Heart left ventricle (tissue), 16 donors: ENCODE measurements at regions of chr1 and their contacts with region 1.

Region 1: GRCh38 chr1:12549460-12550349 is 68.3 kb downstream of the DHRS3 start:
- DNase-seq: peak; percentile 54 to 85 (median 69)
- ATAC-seq: peak; percentile 4 to 41 (median 32)
- H3K4me3 ChIP-seq: no peak overlapping the region
- H3K27ac ChIP-seq: peak overlapping the region in 11 of 12 donors; percentile 45 to 91 (median 73)
- H3K4me1 ChIP-seq: peaks cover 13 to 67% (median 37%) of the 10 kb centered on the region in 12 donors
- H3K27me3 ChIP-seq: no peaks in the 10 kb centered on the region
- CTCF ChIP-seq: no peak
- POLR2A ChIP-seq: no peak

Region 2: DNA sequence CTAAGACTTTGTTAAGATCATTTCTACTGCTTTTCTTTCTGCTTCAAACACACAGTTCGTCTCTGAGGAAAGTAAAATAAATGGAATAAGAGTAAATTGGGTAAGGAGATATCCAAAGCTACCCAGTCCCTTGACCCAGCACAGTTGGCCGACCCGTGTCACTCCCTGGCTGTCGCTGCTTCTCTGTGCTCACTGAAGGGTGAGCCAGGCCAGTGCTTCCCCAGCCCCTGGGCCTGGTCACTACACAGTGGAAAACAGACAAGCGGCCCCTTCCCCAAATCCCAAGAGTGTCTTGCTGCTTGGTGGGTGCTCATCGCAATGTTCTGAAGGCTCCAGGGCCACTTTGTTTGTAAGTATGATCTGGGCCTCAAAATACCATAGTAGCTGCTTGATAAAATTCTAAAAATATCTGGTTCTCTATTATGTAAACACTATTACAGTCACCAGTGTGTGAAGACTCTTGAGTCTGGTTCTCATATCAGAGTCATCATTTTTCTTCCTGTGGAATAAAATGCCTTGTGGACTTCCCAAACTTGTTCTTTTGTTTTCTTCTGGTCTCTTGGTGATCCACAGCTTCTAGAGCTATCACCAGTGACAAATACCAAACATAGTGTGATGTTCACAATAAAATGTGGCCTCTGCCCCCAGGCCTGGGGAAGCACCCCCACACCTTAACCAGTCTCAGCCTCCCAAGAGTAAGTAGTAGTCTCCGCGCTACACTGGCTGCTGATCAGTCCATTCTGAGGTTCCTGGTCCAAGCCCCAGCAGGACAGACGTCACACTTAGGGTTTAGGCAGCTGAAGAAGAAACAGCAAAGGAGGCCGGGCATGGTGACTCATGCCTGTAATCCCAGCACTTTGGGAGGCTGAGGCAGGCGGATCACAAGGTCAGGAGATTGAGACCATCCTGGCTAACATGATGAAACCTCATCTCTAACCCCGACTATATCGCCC is 37.9 kb before region 1 on chr1:
- intact Hi-C with region 1: loop called in 1 of 10 experiments (anchors 5 kb)
- DNase-seq: no peak
- ATAC-seq: peak in 2 of 4 donors; percentile 4 to 38
- H3K4me3 ChIP-seq: peak overlapping the region in 2 of 12 donors; percentile 28 to 47
- H3K27ac ChIP-seq: peak overlapping the region in 10 of 12 donors; percentile 10 to 78 (median 37)
- H3K4me1 ChIP-seq: peaks cover 2 to 52% (median 30%) of the 10 kb centered on the region in 12 donors
- H3K27me3 ChIP-seq: no peaks in the 10 kb centered on the region
- CTCF ChIP-seq: no peak
- POLR2A ChIP-seq: no peak

Region 3: DNA sequence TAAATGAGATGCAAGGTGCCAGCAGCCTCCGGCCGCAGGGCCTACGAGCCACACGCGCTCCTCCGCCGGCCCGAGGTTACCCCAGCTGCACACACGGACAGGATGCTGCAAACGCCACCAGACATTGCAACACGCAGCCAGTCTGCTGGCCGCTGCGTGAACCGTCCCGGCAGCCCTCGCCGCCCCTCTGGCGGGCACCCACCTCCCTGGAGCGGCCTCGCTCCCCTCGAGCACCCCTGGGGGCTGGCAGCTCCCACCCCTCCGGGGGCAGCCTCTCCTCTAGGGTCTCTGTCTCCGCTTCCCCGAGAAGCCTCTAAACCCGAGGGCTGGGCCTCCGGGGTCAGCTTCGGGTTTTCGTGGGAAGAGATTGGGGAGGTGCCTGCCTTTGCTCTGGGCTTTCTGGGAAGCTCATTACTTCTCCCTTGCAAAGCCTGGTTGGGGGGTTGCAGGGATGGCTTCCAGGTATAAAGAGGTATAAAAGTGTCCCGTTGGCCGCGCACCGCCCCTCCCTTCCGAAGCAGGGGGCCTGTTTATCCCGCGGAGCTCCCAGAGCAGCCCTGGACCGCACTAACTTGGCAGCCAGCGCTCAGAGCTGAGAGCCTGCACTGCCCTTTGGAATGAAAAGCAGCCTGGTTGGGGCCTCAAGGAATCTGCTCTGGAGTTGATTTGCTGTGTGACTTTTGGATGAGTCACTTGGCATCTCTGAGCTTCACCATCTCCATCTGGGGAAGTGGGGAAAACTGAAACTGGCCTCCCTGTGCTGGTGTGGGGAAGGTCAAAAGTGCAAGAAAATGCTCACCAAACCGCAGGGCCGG is 46.5 kb after region 1 on chr1:
- intact Hi-C with region 1: loop called in 1 of 10 experiments (anchors 5 kb)
- DNase-seq: peak; percentile 82 to 95 (median 92)
- ATAC-seq: peak; percentile 31 to 76 (median 73)
- H3K4me3 ChIP-seq: peak overlapping the region in 11 of 12 donors; percentile 14 to 56 (median 42)
- H3K27ac ChIP-seq: peak overlapping the region; percentile 84 to 99 (median 90)
- H3K4me1 ChIP-seq: peaks cover 14 to 100% (median 89%) of the 10 kb centered on the region in 12 donors
- H3K27me3 ChIP-seq: no peaks in the 10 kb centered on the region
- CTCF ChIP-seq: no peak
- POLR2A ChIP-seq: peak in 1 of 2 donors; percentile 17

Region 4: DNA sequence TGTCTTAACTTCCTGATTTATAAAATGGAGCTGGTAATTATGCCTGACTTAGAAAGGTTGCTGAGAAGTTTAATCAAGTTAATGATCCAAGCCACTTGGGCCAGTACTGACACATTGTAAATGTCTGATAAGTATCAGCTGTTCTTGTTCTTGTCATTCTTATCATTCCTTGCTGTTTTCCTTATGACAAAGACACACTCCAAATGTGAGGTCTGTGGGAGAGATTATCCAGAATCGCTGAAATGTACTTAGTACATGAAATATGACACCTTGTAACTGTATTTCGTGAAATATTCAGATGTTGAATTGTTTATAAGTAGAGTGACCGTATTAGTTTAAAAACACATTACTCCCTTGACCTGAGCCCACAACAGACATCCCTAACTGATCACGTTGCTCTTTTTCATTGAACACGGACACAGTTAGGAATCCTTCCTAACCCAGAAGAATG is 100.3 kb after region 1 on chr1:
- intact Hi-C with region 1: no loop called
- DNase-seq: no peak
- ATAC-seq: no peak
- H3K4me3 ChIP-seq: no peak overlapping the region
- H3K27ac ChIP-seq: no peak overlapping the region
- H3K4me1 ChIP-seq: no peaks in the 10 kb centered on the region
- H3K27me3 ChIP-seq: no peaks in the 10 kb centered on the region
- CTCF ChIP-seq: no peak
- POLR2A ChIP-seq: no peak